GM18951 (cell line): ENCODE measurements at regions of chr5 and their contacts with region 1.

Region 1: DNA sequence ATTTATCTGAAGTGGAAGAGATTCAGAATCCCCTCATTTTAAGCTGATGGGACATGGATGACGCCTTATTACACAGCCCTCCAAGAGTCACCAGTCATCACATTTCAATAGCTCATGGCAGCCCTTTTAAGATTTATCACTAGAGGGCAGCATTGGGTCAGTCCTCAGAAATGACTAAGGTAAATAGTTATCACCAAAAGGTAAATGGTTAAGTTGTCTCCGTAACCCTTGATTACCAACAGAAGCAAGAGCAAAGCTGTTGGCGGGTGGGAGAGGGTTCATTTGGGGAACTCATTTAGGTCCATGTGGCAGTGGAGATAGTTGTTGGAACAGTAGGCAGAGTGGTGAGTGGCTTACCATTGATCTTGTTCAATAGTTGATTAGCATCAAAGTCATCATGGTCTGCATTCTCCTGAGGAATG is 12.0 kb upstream of the C9 start:
- POLR2A ChIP-seq: no peak

Region 2: DNA sequence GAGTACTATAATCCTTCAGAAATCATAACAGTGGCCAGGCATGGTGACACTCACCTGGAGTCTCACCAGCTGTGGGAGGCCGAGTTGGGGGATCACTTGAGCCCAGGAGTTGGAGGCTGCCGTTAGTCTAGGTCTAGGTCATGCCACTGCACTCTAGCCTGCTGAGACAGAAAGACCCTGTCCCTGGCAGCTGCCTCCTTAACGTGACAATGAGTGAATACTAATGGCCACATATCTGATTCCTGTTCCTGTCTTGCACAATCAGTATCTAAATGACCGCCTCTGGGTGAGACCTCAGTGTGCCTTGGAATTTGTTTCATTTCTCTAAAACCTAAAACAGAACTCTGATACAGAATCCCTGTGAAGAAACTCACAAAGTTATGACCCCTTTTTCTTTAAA is 179.5 kb after region 1 on chr5:
- in situ Hi-C with region 1: loop called (anchors 10 kb)
- POLR2A ChIP-seq: no peak